Head of caudate nucleus (tissue), 42 donors: ENCODE measurements at regions of chr1 and their contacts with region 1.

Region 1: GRCh38 chr1:15994590-15995351 is 9.3 kb upstream of the SRARP start:
- DNase-seq: peak; percentile 44 to 93 (median 80)

Region 2: DNA sequence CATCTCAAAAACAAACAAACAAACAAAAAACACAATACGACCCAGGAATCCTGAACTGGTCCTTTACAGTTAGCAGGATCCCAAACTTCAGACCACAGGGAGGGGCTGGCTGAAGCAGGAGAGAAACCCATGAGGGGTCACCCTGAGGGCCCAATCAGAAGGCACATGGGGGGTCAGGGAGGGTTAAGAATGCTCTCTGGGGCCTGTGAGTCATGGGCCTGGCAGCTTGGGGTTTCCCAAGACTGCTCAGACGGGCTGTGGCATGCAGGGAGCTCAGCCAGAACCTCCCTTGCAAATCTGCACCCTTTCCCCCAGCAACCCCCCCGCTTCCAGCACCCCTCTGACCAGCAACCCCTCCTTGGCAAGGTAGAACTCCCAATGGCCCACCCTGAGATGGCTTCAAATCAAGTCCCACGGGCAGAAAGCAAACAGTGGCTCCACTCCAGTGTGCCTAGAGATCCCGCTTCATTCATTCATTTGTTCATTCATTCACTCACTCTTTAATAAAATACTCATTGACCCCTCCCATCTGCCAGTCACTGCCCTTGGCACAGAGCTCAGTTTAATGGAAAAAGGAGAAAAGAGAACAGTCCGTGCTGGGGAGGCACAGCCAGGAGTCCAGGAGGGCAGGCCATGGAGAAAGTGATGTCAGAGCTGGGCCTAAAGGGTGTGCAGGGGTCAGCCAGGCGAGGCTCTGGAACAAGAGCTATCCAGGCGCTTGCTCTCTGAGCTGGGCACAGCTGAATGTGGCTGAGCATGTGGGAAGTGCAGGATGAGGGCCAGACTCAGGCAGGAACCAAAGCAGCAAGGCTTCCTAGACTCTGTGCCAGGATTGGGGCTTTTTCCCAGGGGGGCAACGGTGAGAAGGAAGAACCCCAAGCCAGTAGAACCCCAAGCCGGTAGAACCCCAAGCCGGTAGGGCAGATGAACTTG is 195.5 kb before region 1 on chr1:
- intact Hi-C with region 1: loop called (anchors 10 kb)
- DNase-seq: peak in 17 of 42 donors; percentile 9 to 65 (median 24)

Region 3: DNA sequence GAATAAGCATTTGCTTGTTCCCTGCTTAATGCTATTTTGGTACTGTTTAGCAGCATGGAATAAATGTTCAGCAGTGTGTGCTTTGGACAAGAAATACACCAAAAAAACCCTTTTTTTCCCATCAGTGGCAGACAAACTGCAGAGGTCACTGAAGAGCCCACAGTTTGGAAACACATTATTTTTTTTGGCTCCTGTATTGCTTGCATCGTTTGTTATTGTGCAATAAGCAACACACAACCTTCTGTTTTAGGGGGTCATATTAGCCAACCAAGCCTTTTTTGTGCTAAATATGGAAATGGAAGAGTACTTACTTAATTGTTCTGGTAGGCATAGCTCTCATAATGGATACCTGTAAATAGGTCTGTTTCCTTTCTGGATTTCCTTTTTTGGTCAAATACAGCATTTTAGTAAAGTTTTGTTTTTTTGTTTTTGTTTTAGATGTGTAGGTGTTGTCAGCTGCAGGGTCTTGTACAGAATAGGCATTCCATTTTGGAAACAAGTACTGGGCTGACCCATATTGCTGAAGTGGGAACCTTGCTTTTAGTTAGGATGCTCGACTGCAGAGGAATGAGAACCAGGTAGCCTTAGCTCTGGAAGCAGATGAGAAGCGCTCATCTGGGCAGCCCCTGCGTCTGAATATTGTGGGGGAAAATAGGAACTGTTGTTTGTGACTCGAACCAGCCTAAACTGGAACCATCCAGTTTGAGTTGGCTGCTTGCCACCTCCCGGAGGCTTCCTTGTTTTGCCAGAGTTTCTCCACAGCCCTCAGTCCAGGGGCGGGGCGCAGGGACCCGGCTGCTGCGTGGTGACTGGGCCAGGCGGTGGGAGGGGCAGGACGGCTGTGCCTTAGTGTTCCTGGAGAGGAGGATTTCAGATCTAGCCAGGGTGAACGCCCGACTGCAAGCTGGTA is 108.8 kb before region 1 on chr1:
- intact Hi-C with region 1: loop called (anchors 10 kb)
- DNase-seq: peak; percentile 89 to 98 (median 96)

Region 4: DNA sequence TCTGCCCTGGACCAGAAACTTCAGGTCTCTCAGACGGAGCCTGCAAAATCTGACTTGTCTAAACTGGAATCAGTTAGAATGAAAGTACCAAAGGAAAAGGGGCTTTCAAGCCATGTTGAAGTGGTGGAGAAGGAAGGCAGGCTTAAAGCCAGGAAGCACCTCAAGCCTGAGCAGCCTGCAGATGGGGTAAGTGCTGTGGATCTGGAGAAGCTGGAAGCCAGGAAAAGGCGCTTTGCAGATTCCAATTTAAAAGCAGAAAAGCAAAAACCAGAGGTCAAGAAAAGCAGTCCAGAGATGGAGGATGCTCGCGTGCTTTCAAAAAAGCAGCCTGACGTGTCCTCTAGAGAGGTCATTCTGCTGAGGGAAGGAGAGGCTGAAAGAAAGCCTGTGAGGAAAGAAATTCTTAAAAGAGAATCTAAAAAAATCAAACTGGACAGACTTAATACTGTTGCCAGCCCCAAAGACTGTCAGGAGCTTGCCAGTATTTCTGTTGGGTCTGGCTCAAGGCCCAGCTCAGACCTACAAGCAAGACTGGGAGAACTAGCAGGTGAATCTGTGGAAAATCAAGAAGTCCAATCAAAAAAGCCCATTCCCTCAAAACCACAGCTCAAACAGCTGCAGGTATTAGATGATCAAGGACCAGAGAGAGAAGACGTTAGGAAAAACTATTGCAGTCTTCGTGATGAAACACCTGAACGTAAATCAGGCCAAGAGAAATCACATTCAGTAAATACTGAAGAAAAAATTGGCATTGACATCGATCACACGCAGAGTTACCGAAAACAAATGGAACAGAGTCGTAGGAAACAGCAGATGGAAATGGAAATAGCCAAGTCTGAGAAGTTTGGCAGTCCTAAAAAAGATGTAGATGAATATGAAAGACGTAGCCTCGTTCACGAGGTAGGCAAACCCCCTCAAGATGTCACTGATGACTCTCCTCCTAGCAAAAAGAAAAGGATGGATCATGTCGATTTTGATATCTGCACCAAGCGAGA is 65.5 kb before region 1 on chr1:
- intact Hi-C with region 1: no loop called
- DNase-seq: peak in 1 of 42 donors; percentile 31